ENCODE measurements at regions of chr1 and their contacts with region 1.

Region 1: DNA sequence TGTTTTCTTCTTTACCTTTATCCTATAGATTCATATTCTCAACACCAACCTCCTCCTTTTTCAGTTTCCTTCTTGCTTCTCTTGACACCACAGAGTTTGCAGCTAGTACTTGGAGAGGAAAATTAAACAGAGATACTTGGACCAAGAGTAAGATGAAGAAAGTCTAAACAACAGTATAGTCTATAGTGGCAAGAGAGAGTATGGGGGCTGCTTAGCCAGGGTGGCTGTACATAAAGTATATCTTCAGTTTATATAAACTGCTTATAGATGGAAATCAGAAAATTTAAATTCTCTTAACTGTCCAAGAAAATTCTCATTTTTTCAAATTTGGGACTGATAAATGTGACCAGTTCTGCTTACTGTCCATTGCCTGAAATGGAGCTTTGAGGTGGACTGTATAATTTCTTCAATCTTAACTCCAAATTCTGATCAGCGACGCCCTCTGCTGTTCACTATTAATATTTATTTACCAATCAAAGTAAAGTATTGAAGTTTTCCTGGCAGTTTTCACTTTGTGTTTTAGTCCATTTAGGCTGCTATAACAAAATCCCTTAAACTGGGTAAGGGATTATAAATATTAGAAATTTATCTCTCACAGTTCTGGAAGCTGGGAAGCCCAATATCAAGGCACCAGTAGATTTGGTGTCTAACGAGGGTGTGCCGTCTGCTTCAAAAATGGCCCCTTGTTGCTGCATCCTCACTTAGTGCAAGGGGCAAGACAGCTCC is 14.8 kb upstream of the METTL18 start:
- DNase-seq: peak; percentile 58
- H3K4me3 ChIP-seq: no peak overlapping the region
- H3K27ac ChIP-seq: no peak overlapping the region
- H3K4me1 ChIP-seq: no peaks in the 10 kb centered on the region
- H3K27me3 ChIP-seq: no peaks in the 10 kb centered on the region
- CTCF ChIP-seq: peak in 1 of 2 donors; percentile 23
- POLR2A ChIP-seq: no peak

Region 2: DNA sequence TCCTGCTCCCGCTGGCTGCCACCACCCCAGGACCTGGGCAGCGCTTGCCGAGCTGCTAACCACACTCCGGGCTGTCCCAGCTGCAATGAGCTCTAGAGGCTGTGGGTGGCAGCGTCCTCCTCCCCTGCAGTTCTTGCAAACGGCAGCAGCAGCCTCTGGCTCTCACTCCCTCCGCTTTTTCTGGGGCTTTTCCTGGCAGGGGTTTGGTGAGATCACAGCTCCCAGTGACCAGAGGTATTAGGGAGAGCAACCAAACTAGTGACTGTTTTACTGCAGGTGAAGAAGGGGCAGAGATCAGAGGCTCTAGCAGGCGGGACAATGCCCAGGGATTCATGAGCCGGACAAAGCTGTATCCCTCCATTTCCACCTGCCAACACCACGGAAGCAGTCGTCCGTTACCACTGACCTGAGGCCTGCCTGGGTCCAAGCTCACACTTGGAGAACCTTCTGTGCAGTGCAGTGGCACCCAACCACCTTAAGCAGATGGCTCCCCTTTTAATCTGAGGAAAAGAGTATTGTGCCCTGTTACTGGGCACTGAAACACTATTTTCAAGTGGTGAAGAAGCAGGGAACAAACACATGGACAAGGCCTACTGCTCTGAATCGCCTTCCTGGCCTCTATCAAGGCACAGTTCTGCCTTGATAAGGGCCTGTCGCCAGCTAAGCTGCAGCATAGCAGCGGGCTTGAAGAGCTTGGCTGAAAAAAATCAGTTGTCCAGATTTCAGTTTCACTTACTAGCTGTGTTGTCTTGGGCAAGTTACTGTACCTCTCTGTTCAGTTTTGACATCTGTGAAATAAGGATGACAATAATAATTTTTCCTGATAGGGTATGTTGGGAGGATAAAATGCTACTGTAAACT is 222.9 kb before region 1 on chr1 and contains the start of gene F5:
- CTCF ChIA-PET with region 1: interaction called, 39 read pairs
- POLR2A ChIA-PET with region 1: interaction called, 3 read pairs
- dilution Hi-C with region 1: no loop called
- intact Hi-C with region 1: loop called (anchors 1 kb)
- DNase-seq: peak; percentile 61
- H3K4me3 ChIP-seq: no peak within 1 kb of the TSS
- H3K27ac ChIP-seq: no peak within 1 kb of the TSS
- H3K4me1 ChIP-seq: no peaks in the 10 kb centered on the region
- H3K27me3 ChIP-seq: peaks cover 0 to 4% of the 10 kb centered on the region in 2 experiments
- CTCF ChIP-seq: peak; percentile 43 to 79
- POLR2A ChIP-seq: no peak
- total RNA-seq, gene F5: not detected in 2 replicates

Region 3: DNA sequence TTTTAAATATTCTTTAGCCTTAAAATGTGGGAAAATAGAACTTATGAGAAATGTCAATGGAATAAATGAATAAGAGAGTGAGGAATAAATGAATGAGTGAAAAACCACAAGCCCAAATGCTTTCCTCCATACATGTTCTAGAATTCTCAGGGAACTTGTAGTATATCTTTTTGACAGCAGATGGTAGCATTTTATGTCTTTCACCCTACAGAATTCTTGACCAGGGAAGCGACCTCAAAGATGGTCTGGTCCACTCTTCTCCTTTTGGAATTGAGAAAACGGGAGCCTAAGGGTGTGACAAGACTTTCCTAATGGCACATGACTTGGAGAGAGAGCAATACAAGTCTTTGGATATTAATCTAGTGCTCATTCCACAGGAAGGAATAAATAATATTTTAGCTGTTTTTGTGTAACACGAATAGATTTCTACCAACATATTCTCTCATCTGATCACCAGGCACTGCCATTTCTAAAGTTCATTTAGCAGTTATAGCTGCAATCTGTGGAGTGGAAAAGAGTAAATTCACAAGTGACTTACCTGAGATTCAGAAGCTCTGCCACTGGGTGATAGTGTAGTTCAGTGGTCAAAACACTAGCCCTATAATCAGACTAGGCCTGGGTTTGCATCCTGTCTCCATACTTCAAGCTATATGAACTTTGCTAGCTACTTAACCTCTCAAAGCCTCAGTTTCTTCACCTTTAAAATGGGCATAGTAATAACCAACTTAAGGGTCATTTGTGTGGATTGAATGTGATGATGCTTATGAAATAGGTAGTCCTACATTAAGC is 208.2 kb before region 1 on chr1:
- CTCF ChIA-PET with region 1: interaction called, 82 read pairs
- POLR2A ChIA-PET with region 1: no interaction called
- dilution Hi-C with region 1: no loop called
- intact Hi-C with region 1: loop called (anchors 1 kb)
- DNase-seq: peak; percentile 66
- H3K4me3 ChIP-seq: no peak overlapping the region
- H3K27ac ChIP-seq: no peak overlapping the region
- H3K4me1 ChIP-seq: no peaks in the 10 kb centered on the region
- H3K27me3 ChIP-seq: peaks cover 0 to 6% of the 10 kb centered on the region in 2 experiments
- CTCF ChIP-seq: peak; percentile 20 to 31
- POLR2A ChIP-seq: no peak

Region 4: DNA sequence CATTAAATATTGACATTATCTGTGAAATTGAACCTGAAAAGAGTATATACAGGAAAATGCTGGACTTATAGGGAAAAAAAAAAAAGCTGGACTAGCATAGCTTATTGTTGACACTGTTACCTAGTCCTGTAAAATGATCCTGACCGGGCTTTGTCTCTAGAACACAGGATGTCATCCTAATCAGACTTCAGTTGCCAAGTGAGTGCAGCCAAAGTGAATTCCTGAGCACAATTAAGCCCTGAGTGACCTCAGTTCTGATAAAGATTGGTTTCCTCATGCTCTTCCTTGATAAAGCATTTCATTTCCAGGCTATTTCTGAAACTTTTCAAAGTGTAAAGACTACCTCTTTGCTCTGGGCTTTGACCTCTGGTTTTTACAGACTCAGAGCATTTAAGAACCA is 199.4 kb before region 1 on chr1:
- CTCF ChIA-PET with region 1: interaction called, 12 read pairs
- POLR2A ChIA-PET with region 1: no interaction called
- dilution Hi-C with region 1: no loop called
- intact Hi-C with region 1: no loop called
- DNase-seq: peak; percentile 82
- H3K4me3 ChIP-seq: no peak overlapping the region
- H3K27ac ChIP-seq: peak overlapping the region; percentile 20
- H3K4me1 ChIP-seq: peaks cover 13% of the 10 kb centered on the region
- H3K27me3 ChIP-seq: no peaks in the 10 kb centered on the region
- CTCF ChIP-seq: no peak
- POLR2A ChIP-seq: no peak

Region 5: DNA sequence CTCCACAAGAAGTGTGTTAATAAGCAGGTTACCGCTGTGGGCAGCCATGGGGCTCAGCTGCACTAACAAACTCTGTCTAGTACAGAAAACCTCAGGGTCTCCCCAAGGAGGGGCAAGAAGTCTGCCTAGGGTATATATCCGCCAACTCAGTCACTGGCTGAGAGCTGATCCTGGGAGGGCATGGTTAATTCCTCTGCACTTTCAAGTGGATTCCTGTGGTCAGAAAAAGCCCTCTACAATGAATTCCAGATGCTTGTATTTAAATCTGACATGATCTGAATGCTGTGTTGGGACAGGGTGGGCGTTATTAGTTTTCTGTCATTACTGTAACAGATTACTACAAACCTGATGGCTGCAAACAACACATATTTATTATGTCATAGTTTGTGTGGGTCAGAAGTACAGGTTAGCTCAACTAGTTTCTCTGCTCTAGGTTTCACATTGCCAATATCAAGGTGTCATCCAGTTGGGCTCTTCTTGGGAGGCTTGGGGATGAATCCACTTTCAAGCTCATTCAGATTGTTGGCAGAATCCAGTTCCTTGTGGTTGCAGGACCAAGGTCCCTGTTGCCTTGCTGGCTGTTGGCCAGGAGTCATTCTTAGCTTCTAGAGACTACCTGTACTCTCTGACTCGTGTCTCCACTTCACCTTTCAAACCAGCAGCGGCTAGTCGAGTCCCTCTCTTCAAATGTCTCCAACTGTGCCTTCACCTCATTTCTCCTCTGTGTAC is 67.7 kb before region 1 on chr1:
- CTCF ChIA-PET with region 1: interaction called, 12 read pairs
- POLR2A ChIA-PET with region 1: interaction called, 3 read pairs
- dilution Hi-C with region 1: no loop called
- intact Hi-C with region 1: no loop called
- DNase-seq: no peak
- H3K4me3 ChIP-seq: no peak overlapping the region
- H3K27ac ChIP-seq: no peak overlapping the region
- H3K4me1 ChIP-seq: peaks cover 26% of the 10 kb centered on the region
- H3K27me3 ChIP-seq: no peaks in the 10 kb centered on the region
- CTCF ChIP-seq: no peak
- POLR2A ChIP-seq: no peak

Region 6: GRCh38 chr1:169899519-169900217 is 90.1 kb after region 1 on chr1:
- CTCF ChIA-PET with region 1: no interaction called
- POLR2A ChIA-PET with region 1: no interaction called
- dilution Hi-C with region 1: no loop called
- intact Hi-C with region 1: no loop called
- DNase-seq: no peak
- H3K4me3 ChIP-seq: no peak overlapping the region
- H3K27ac ChIP-seq: no peak overlapping the region
- H3K4me1 ChIP-seq: peaks cover 9% of the 10 kb centered on the region
- H3K27me3 ChIP-seq: peaks cover 27 to 38% of the 10 kb centered on the region in 2 experiments
- CTCF ChIP-seq: no peak
- POLR2A ChIP-seq: no peak

Region 7: GRCh38 chr1:170881268-170882265 is 1072.0 kb after region 1 on chr1:
- CTCF ChIA-PET with region 1: no interaction called
- POLR2A ChIA-PET with region 1: no interaction called
- dilution Hi-C with region 1: no loop called
- intact Hi-C with region 1: loop called (anchors 10 kb)
- DNase-seq: peak; percentile 39
- H3K4me3 ChIP-seq: no peak overlapping the region
- H3K27ac ChIP-seq: no peak overlapping the region
- H3K4me1 ChIP-seq: no peaks in the 10 kb centered on the region
- H3K27me3 ChIP-seq: no peaks in the 10 kb centered on the region
- CTCF ChIP-seq: peak in 1 of 2 donors; percentile 19
- POLR2A ChIP-seq: no peak

Measured in endothelial cell of umbilical vein (primary cell).